ENCODE measurements at regions of chr12 and their contacts with region 1.

Region 1: GRCh38 chr12:120265473-120266179 is at the start of gene PXN:
- DNase-seq: peak; percentile 87
- H3K4me3 Mint-ChIP-seq: peak within 1 kb of the TSS; percentile 97
- H3K27ac Mint-ChIP-seq: peak within 1 kb of the TSS; percentile 97
- H3K4me1 Mint-ChIP-seq: peaks cover 51% of the 10 kb centered on the region
- H3K27me3 Mint-ChIP-seq: no peaks in the 10 kb centered on the region
- total RNA-seq, gene PXN: 53.0 and 57.7 TPM in 2 replicates

Region 2: DNA sequence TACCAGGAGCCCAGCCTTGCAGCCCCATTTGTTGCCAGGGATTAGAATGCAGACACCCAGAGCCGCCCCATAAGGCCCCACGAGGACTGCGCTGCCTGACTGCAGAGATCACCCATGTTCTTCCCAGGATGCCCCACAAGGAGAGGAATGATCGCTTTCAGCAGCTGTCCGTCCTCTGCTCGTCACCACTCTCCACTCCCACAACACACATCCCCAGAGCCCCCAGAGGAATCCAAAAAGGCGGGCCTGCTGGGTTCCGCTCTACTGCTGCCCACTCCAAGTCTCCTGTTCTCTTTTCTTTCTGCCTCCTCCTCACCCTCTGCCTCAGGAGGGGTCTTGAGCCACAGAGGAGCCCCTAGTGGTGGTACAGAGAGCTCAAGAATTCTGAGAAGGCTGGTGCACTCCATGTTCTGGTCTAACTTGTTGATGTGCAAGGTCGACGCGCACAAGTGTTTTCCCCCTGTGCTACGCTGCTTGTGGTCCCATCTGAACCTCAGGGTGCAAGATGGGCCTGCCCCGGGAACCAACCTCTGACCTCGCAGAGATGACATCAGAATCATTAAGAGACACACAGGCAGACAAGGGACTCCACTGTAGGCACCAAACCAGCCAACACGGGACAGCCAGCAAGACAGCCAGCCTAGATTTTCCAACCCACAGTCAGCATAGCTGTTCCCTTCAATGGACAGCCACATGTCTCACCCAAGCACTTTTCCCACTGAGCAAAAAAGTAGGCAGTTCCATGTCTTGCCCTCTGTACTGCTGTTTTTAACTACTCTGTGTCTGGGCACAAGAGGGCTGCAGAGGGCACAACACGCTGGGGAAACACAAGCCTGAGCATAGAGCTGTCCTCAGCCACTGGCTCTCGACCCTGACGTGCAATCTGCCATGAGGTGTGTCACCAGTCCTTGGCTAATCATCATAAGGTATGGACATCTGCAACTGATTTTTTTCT is 30.0 kb before region 1 on chr12:
- intact Hi-C with region 1: no loop called
- DNase-seq: no peak
- H3K4me3 Mint-ChIP-seq: no peak overlapping the region
- H3K27ac Mint-ChIP-seq: peak overlapping the region; percentile 44
- H3K4me1 Mint-ChIP-seq: peaks cover 73% of the 10 kb centered on the region
- H3K27me3 Mint-ChIP-seq: no peaks in the 10 kb centered on the region

Region 3: DNA sequence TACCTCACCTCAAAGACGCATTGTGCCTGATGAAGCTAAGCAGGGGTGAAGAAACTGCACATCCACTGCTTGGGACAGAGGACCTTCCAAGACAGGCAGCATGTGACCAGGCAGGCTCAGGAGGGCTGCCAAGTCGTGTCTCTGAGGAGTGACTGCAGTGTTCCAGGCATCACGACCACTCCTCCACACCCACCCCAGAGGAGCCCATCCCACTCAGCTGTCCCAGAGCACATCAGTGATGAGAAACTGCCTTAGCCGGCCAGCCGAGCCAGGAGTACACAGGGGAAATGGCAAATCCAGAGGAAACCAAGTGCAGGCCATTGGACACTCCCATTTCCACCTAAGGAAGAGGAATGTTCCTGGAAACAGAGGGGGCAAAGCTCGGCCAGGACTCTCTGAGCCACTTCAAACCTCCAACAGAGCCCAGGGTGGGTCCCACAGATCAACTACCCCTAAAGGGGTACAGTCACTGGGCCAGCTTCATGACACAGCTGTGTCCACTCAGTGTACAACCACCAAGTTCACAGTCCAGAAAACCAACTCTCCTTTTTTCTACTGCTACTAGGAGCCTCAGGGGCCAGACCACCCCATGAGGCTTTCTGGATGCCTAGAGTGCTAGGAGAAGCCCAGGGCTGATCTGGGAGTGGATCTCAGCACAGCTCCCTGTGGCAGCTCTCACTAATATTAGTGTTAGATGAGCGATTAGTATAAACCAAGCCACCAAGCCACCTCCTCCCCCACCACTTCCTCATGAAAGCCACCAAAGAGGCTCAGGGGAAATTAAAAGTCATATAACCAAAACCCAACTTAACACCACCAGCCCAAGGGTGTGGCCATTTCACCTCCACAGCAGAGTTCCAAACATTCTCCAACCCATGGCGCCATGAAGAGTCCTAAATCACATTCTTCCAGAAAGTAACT is 15.5 kb before region 1 on chr12:
- intact Hi-C with region 1: loop called (anchors 1 kb)
- DNase-seq: peak; percentile 42
- H3K4me3 Mint-ChIP-seq: peak overlapping the region; percentile 73
- H3K27ac Mint-ChIP-seq: peak overlapping the region; percentile 53
- H3K4me1 Mint-ChIP-seq: peaks cover 77% of the 10 kb centered on the region
- H3K27me3 Mint-ChIP-seq: no peaks in the 10 kb centered on the region

Region 4: GRCh38 chr12:120394483-120395367 is 129.1 kb after region 1 on chr12:
- intact Hi-C with region 1: no loop called
- DNase-seq: no peak
- H3K4me3 Mint-ChIP-seq: no peak overlapping the region
- H3K27ac Mint-ChIP-seq: no peak overlapping the region
- H3K4me1 Mint-ChIP-seq: no peaks in the 10 kb centered on the region
- H3K27me3 Mint-ChIP-seq: peaks cover 24% of the 10 kb centered on the region